Activated CD4-positive, alpha-beta T cell treated with anti-CD3 and anti-CD28 coated beads for 36 hours (primary cell): ENCODE measurements at regions of chr11 and their contacts with region 1.

Region 1: GRCh38 chr11:61187505-61188130 is 15.7 kb upstream of the PGA3 start:
- DNase-seq: peak; percentile 89
- ATAC-seq: peak; percentile 92
- H3K4me3 Mint-ChIP-seq: no peak overlapping the region
- H3K27ac Mint-ChIP-seq: no peak overlapping the region
- H3K4me1 Mint-ChIP-seq: peaks cover 2% of the 10 kb centered on the region
- H3K27me3 Mint-ChIP-seq: peaks cover 3% of the 10 kb centered on the region

Region 2: GRCh38 chr11:60831143-60831500 is 356.5 kb before region 1 on chr11:
- CTCF ChIA-PET with region 1: interaction called, 35 read pairs
- POLR2A ChIA-PET with region 1: no interaction called
- intact Hi-C with region 1: loop called (anchors 1 kb)
- DNase-seq: peak; percentile 90
- ATAC-seq: peak; percentile 95
- H3K4me3 Mint-ChIP-seq: no peak overlapping the region
- H3K27ac Mint-ChIP-seq: no peak overlapping the region
- H3K4me1 Mint-ChIP-seq: peaks cover 8% of the 10 kb centered on the region
- H3K27me3 Mint-ChIP-seq: peaks cover 6% of the 10 kb centered on the region

Region 3: GRCh38 chr11:60924110-60924905 is 263.3 kb before region 1 on chr11 and contains the start of gene TMEM132A:
- CTCF ChIA-PET with region 1: no interaction called
- POLR2A ChIA-PET with region 1: no interaction called
- intact Hi-C with region 1: loop called in 1 of 2 experiments (anchors 2 kb)
- DNase-seq: peak; percentile 37
- ATAC-seq: peak; percentile 37
- H3K4me3 Mint-ChIP-seq: peak within 1 kb of the TSS; percentile 19
- H3K27ac Mint-ChIP-seq: no peak within 1 kb of the TSS
- H3K4me1 Mint-ChIP-seq: peaks cover 17% of the 10 kb centered on the region
- H3K27me3 Mint-ChIP-seq: peaks cover 12% of the 10 kb centered on the region
- total RNA-seq, gene TMEM132A: 1.9 to 2.0 TPM

Region 4: DNA sequence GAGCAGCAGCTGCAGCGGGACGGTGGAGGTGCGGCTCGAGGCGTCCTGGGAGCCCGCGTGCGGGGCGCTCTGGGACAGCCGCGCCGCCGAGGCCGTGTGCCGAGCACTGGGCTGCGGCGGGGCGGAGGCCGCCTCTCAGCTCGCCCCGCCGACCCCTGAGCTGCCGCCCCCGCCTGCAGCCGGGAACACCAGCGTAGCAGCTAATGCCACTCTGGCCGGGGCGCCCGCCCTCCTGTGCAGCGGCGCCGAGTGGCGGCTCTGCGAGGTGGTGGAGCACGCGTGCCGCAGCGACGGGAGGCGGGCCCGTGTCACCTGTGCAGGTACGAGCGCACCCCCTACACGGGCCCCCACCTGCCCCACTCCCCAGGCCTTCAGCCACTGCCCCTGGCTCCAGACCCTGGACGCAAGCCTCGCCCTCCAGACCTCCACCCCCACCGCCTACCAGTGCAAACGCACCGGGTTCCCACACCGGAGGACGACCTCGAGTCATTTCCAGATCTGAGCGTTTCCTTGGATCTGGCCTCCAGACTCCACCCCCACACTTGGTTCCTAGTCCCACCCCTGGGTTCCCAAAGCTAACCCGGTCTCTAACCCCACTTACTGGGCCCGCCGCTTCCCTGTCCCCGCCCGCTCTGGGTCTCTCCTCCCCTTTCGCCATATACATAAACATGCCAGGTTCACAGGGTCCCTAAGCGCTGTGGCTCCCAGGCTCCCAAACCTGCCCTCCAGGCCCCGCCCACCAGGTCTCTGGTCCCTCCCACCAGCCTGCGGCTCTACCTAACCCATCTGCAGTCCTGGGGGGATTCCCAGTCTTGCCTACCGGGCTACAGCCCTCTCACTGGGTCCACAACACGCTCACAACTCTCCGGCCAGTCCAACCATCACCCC is 179.8 kb before region 1 on chr11:
- CTCF ChIA-PET with region 1: no interaction called
- POLR2A ChIA-PET with region 1: no interaction called
- intact Hi-C with region 1: no loop called
- DNase-seq: no peak
- ATAC-seq: no peak
- H3K4me3 Mint-ChIP-seq: peak overlapping the region; percentile 49
- H3K27ac Mint-ChIP-seq: peak overlapping the region; percentile 94
- H3K4me1 Mint-ChIP-seq: peaks cover 86% of the 10 kb centered on the region
- H3K27me3 Mint-ChIP-seq: no peaks in the 10 kb centered on the region

Region 5: DNA sequence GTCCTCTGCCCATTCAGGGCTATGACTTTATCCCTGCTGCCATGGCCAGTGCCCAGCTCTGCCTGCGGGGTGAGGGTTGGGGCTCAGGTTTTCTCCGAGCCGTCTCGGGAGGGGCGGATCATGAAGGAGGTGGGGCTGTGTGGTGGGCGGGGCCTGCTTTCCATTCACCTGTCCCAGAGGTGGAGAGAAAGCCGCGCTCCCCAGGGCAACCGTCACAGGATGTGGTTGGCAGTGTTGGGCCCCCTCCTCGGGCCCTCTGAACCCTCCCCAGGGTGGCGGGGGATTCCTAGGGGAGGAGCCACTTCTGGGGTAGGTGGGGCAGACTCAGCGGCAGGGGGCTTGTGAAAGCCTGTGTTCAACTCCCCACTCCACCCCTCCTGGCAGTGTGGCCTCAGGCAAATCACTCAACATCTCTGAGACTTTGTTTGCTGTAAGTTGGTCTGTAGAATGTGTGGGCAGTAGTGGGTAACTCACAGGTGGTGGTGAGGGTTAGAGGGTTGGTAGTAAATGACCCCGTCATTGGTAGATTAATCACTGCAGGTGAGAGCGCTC is 165.9 kb before region 1 on chr11:
- CTCF ChIA-PET with region 1: interaction called, 3 read pairs
- POLR2A ChIA-PET with region 1: no interaction called
- intact Hi-C with region 1: loop called (anchors 2 to 5 kb)
- DNase-seq: peak; percentile 94
- ATAC-seq: peak; percentile 50
- H3K4me3 Mint-ChIP-seq: peak overlapping the region; percentile 79
- H3K27ac Mint-ChIP-seq: peak overlapping the region; percentile 97
- H3K4me1 Mint-ChIP-seq: peaks cover 92% of the 10 kb centered on the region
- H3K27me3 Mint-ChIP-seq: no peaks in the 10 kb centered on the region

Region 6: DNA sequence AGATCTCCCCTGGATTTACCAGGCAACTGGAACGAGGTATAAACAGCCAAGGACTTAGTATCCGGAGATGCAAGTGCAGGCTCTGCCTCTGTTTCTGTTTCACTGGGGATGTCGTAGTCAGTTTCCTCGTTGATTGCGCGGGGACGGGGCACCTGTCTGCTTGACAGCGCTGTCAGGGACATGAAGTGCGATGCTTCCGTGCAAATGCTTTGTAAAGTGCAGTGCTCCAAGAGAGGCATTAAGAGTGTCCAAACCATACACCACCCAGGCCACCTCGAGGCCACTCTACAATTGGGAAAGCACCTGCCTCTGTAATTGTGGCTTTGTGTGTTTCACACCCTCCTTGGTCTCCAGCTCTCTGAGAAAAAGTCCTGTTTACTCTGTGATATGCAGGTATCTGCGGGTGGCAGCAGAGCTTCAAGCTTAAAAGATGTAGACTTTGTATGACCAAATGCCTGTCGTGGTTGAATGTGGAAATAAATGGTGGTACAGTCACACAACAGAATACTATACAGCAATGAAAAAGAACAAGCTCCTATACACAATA is 103.9 kb before region 1 on chr11:
- CTCF ChIA-PET with region 1: no interaction called
- POLR2A ChIA-PET with region 1: no interaction called
- intact Hi-C with region 1: loop called in 1 of 2 experiments (anchors 2 kb)
- DNase-seq: peak; percentile 86
- ATAC-seq: peak; percentile 66
- H3K4me3 Mint-ChIP-seq: peak overlapping the region; percentile 87
- H3K27ac Mint-ChIP-seq: peak overlapping the region; percentile 99
- H3K4me1 Mint-ChIP-seq: peaks cover 64% of the 10 kb centered on the region
- H3K27me3 Mint-ChIP-seq: no peaks in the 10 kb centered on the region

Region 7: DNA sequence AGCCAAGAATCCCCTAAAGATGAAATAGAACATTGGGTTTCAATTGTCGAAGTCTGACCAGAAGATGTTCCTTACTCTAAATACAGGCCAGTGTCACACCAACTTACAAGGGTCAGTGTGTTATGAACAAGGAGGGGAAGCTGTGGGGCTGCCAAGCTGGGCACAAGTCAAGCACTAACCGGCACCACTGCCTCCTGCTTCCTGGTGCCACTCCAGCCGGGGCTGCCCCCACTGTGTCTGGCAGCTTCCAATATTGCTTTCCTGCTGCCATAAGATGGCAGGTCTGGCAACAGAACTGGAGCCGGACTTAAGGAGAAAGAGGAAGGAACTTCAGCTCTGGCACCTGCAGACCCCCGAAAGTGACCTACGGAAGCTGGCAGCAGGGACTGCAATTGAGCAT is 12.7 kb before region 1 on chr11:
- CTCF ChIA-PET with region 1: interaction called, 17 read pairs
- POLR2A ChIA-PET with region 1: no interaction called
- intact Hi-C with region 1: no loop called
- DNase-seq: no peak
- ATAC-seq: no peak
- H3K4me3 Mint-ChIP-seq: no peak overlapping the region
- H3K27ac Mint-ChIP-seq: no peak overlapping the region
- H3K4me1 Mint-ChIP-seq: peaks cover 12% of the 10 kb centered on the region
- H3K27me3 Mint-ChIP-seq: peaks cover 1% of the 10 kb centered on the region

Region 8: GRCh38 chr11:61378713-61379313 is 191.2 kb after region 1 on chr11:
- CTCF ChIA-PET with region 1: no interaction called
- POLR2A ChIA-PET with region 1: no interaction called
- intact Hi-C with region 1: no loop called
- DNase-seq: no peak
- ATAC-seq: no peak
- H3K4me3 Mint-ChIP-seq: no peak overlapping the region
- H3K27ac Mint-ChIP-seq: no peak overlapping the region
- H3K4me1 Mint-ChIP-seq: no peaks in the 10 kb centered on the region
- H3K27me3 Mint-ChIP-seq: no peaks in the 10 kb centered on the region